ENCODE measurements at regions of chr1 and their contacts with region 1.

Region 1: GRCh38 chr1:165717918-165718515 is 19.7 kb upstream of the ALDH9A1 start:
- DNase-seq: peak; percentile 52
- H3K4me3 ChIP-seq: no peak overlapping the region
- H3K27ac ChIP-seq: no peak overlapping the region
- H3K4me1 ChIP-seq: no peaks in the 10 kb centered on the region
- H3K27me3 ChIP-seq: no peaks in the 10 kb centered on the region
- CTCF ChIP-seq: peak; percentile 77 to 87

Region 2: DNA sequence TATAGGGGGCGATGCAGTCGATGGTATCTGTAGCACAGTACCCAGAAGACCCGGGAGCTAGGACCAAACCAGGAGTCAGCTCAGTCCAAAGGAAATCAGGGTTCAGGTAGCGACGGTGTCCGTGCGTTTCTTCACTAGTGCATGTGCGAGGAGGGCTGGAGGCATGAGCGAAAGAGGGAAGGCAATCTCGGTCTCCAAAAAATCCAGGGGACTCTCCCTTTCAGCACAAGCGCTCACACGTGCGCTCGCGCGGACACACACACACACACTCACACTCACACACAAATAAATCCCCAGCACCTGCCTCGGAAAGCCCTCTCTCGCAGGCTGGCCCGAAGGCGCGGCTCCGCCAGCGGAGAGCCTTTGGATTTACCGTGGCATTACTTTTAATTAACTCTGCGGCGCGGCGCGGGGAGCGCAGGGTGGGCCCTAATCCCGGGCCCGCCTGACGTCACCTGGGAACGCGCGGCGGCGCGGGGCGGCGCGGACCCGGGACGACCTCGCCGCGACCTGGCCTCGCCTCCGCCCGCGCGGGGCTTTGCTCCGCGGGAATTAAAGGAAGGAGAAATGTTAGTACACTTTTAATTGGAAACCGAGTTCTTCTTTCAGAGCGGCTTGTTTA is 482.8 kb before region 1 on chr1:
- CTCF ChIA-PET with region 1: no interaction called
- dilution Hi-C with region 1: no loop called
- in situ Hi-C with region 1: no loop called
- intact Hi-C with region 1: no loop called
- DNase-seq: no peak
- H3K4me3 ChIP-seq: no peak overlapping the region
- H3K27ac ChIP-seq: no peak overlapping the region
- H3K4me1 ChIP-seq: peaks cover 4% of the 10 kb centered on the region
- H3K27me3 ChIP-seq: peaks cover 23% of the 10 kb centered on the region
- CTCF ChIP-seq: no peak

Region 3: DNA sequence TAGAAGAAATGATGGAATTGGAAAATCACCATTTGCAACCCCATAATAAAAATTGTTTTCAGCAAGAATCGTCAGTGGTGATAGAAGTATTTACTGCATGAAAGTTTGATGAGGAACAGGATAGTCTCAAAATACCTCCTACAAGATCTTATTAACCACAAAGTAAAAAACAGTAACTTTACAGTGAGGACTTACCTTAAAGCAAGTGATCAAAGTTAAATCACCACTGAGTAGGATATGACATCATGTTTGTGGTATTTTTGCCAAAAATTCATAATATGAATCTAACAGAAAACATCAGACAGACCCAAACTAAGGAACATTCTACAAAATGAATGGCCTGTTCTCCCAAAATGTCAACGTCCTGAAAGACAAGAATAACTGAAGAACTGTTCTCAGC is 39.5 kb before region 1 on chr1:
- CTCF ChIA-PET with region 1: no interaction called
- dilution Hi-C with region 1: no loop called
- in situ Hi-C with region 1: no loop called
- intact Hi-C with region 1: no loop called
- DNase-seq: no peak
- H3K4me3 ChIP-seq: no peak overlapping the region
- H3K27ac ChIP-seq: no peak overlapping the region
- H3K4me1 ChIP-seq: no peaks in the 10 kb centered on the region
- H3K27me3 ChIP-seq: no peaks in the 10 kb centered on the region
- CTCF ChIP-seq: no peak

Region 4: GRCh38 chr1:165773324-165773965 is 55.4 kb after region 1 on chr1:
- CTCF ChIA-PET with region 1: no interaction called
- dilution Hi-C with region 1: no loop called
- in situ Hi-C with region 1: no loop called
- intact Hi-C with region 1: no loop called
- DNase-seq: peak; percentile 88
- H3K4me3 ChIP-seq: no peak overlapping the region
- H3K27ac ChIP-seq: peak overlapping the region; percentile 69
- H3K4me1 ChIP-seq: peaks cover 18% of the 10 kb centered on the region
- H3K27me3 ChIP-seq: no peaks in the 10 kb centered on the region
- CTCF ChIP-seq: no peak

Region 5: GRCh38 chr1:165827268-165828102 is 109.5 kb after region 1 on chr1 and contains the start of gene UCK2:
- CTCF ChIA-PET with region 1: no interaction called
- dilution Hi-C with region 1: no loop called
- in situ Hi-C with region 1: no loop called
- intact Hi-C with region 1: loop called (anchors 2 kb)
- DNase-seq: peak; percentile 81
- H3K4me3 ChIP-seq: peak within 1 kb of the TSS; percentile 81 to 89 (median 85)
- H3K27ac ChIP-seq: peak within 1 kb of the TSS; percentile 85
- H3K4me1 ChIP-seq: peaks cover 13% of the 10 kb centered on the region
- H3K27me3 ChIP-seq: no peaks in the 10 kb centered on the region
- CTCF ChIP-seq: peak in 1 of 2 donors; percentile 0
- total RNA-seq, gene UCK2: 85.2 to 111 TPM

Region 6: GRCh38 chr1:165914136-165914798 is 196.2 kb after region 1 on chr1:
- CTCF ChIA-PET with region 1: no interaction called
- dilution Hi-C with region 1: no loop called
- in situ Hi-C with region 1: loop called (anchors 5 kb)
- intact Hi-C with region 1: loop called (anchors 1 kb)
- DNase-seq: peak; percentile 62
- H3K4me3 ChIP-seq: no peak overlapping the region
- H3K27ac ChIP-seq: no peak overlapping the region
- H3K4me1 ChIP-seq: peaks cover 4% of the 10 kb centered on the region
- H3K27me3 ChIP-seq: no peaks in the 10 kb centered on the region
- CTCF ChIP-seq: peak; percentile 81 to 88

Region 7: GRCh38 chr1:166166695-166167571 is 448.9 kb after region 1 on chr1 and contains the start of gene FAM78B:
- CTCF ChIA-PET with region 1: no interaction called
- dilution Hi-C with region 1: no loop called
- in situ Hi-C with region 1: no loop called
- intact Hi-C with region 1: loop called (anchors 10 kb)
- DNase-seq: peak; percentile 67
- H3K4me3 ChIP-seq: peak within 1 kb of the TSS; percentile 44 to 69 (median 65)
- H3K27ac ChIP-seq: no peak within 1 kb of the TSS
- H3K4me1 ChIP-seq: peaks cover 38% of the 10 kb centered on the region
- H3K27me3 ChIP-seq: peaks cover 20% of the 10 kb centered on the region
- CTCF ChIP-seq: peak in 1 of 2 donors; percentile 7
- total RNA-seq, gene FAM78B: 0.33 to 0.40 TPM